ENCODE measurements at regions of chr17 and their contacts with region 1.

Region 1: GRCh38 chr17:31094600-31095238 is at the start of gene NF1:
- H3K4me3 ChIP-seq: peak within 1 kb of the TSS; percentile 70
- H3K27ac ChIP-seq: peak within 1 kb of the TSS; percentile 94
- H3K4me1 ChIP-seq: peaks cover 4% of the 10 kb centered on the region; the same call in 1 of the 2 replicates
- CTCF ChIP-seq: no peak

Region 2: DNA sequence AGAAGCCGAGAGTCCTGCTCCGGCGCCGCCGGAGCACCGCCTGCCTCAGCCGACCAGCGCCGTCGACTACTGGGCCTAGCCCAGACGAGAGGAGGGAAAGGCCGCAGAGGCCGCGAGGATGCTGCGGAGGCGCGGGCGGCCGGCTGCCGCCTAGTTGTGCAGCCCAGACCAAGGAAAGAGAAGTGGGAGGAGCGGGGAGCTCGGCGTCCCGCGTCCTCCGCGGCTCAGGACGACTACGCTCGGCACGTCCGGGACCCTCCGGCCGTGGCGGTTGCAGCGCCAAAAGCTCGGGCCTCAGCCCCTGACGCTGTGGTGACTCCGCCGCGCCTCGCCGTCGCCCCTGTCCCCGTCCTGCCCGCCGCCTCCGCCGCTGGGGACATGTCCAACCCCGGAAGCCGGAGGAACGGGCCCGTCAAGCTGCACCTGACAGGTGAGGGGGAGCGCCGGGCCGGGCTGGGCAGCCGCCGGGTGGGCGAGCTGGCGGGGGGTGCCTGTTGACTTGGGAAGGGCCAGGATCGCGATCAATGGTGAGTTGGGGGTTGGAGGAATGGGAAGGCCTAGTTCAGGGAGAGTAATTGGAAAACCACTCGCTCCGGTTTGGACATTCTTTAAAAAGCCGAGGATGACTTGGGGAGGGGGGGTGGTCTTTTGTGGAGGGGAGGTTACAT is 86.2 kb before region 1 on chr17:
- CTCF ChIA-PET with region 1: interaction called, 4 read pairs
- POLR2A ChIA-PET with region 1: interaction called, 12 read pairs
- H3K4me3 ChIP-seq: peak overlapping the region; percentile 70
- H3K27ac ChIP-seq: peak overlapping the region; percentile 97
- H3K4me1 ChIP-seq: peaks cover 3% of the 10 kb centered on the region; the same call in 1 of the 2 replicates
- CTCF ChIP-seq: peak; percentile 52

Region 3: GRCh38 chr17:31074772-31075555 is 19.8 kb before region 1 on chr17:
- CTCF ChIA-PET with region 1: interaction called, 9 read pairs
- POLR2A ChIA-PET with region 1: interaction called, 16 read pairs
- H3K4me3 ChIP-seq: no peak overlapping the region
- H3K27ac ChIP-seq: no peak overlapping the region
- H3K4me1 ChIP-seq: peaks cover 16% of the 10 kb centered on the region; the same call in 1 of the 2 replicates
- CTCF ChIP-seq: no peak

Region 4: GRCh38 chr17:31235110-31235509 is 140.4 kb after region 1 on chr17:
- CTCF ChIA-PET with region 1: no interaction called
- POLR2A ChIA-PET with region 1: interaction called, 10 read pairs
- H3K4me3 ChIP-seq: no peak overlapping the region
- H3K27ac ChIP-seq: no peak overlapping the region
- H3K4me1 ChIP-seq: no peaks in the 10 kb centered on the region
- CTCF ChIP-seq: no peak

Measured in HEK293 (cell line).